ENCODE measurements at regions of chr2 and their contacts with region 1.

Region 1: GRCh38 chr2:55120634-55121359 is 70.5 kb upstream of the RTN4 start:
- DNase-seq: peak; percentile 68 to 95 (median 87)

Region 2: GRCh38 chr2:55050133-55050994 is 70.4 kb before region 1 on chr2 and contains the start of gene RTN4:
- intact Hi-C with region 1: loop called (anchors 5 kb)
- DNase-seq: peak; percentile 95 to 100 (median 99)

Region 3: DNA sequence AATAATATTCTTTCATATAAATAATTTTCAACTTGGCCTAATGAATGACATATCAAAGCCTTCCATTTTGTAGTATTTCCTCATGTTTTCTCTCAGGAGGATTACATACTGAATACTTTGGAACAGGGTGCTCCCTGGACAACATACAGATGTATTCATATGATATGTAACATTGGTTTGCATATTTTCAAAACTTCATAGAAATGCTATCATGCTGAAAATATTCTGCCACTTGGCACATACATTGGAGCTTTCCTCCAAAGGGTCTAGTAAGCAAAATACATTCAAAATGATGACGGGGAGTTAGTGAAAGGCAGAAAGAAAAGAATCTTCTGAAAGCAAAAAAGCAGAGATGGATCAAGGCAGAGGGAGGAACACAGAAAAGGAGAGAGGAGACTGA is 32.4 kb before region 1 on chr2:
- intact Hi-C with region 1: no loop called
- DNase-seq: no peak